ENCODE measurements at regions of chr15 and their contacts with region 1.

Region 1: GRCh38 chr15:47196057-47196456 is 521.2 kb upstream of the SEMA6D start:
- DNase-seq: peak; percentile 83
- H3K4me3 ChIP-seq: no peak overlapping the region
- H3K27ac ChIP-seq: no peak overlapping the region
- H3K4me1 ChIP-seq: peaks cover 3% of the 10 kb centered on the region
- H3K27me3 ChIP-seq: no peaks in the 10 kb centered on the region
- CTCF ChIP-seq: peak; percentile 85
- POLR2A ChIP-seq: no peak

Region 2: DNA sequence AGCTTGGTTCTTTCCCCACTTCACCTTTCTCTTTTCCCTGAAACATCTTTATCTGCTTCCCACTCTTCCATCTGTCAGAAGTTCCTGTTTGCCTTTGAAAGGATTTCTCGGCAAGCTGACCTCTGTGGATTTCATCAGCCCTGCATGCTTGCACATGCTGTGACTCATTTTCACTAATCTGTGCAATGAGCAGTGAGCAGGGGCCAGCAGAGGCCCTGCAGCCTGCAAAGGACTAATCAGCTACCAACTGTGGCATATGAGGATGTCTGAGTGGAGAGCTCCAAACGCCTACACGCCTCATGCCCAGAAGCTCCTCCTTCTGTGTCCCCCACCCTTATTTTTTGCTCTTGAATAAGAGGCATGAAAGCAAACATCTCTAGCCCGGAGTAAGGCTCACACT is 188.3 kb after region 1 on chr15:
- CTCF ChIA-PET with region 1: interaction called, 10 read pairs
- POLR2A ChIA-PET with region 1: no interaction called
- dilution Hi-C with region 1: no loop called
- intact Hi-C with region 1: no loop called
- DNase-seq: peak; percentile 97
- H3K4me3 ChIP-seq: no peak overlapping the region
- H3K27ac ChIP-seq: peak overlapping the region; percentile 83
- H3K4me1 ChIP-seq: peaks cover 21% of the 10 kb centered on the region
- H3K27me3 ChIP-seq: no peaks in the 10 kb centered on the region
- CTCF ChIP-seq: no peak
- POLR2A ChIP-seq: no peak

Region 3: GRCh38 chr15:47516558-47516957 is 320.5 kb after region 1 on chr15:
- CTCF ChIA-PET with region 1: interaction called, 8 read pairs
- POLR2A ChIA-PET with region 1: no interaction called
- dilution Hi-C with region 1: no loop called
- intact Hi-C with region 1: loop called (anchors 5 kb)
- DNase-seq: no peak
- H3K4me3 ChIP-seq: no peak overlapping the region
- H3K27ac ChIP-seq: peak overlapping the region; percentile 66
- H3K4me1 ChIP-seq: peaks cover 52% of the 10 kb centered on the region
- H3K27me3 ChIP-seq: peaks cover 0 to 3% of the 10 kb centered on the region in 2 experiments
- CTCF ChIP-seq: no peak
- POLR2A ChIP-seq: no peak

Region 4: GRCh38 chr15:47663101-47663500 is 467.0 kb after region 1 on chr15:
- CTCF ChIA-PET with region 1: interaction called, 4 read pairs
- POLR2A ChIA-PET with region 1: no interaction called
- dilution Hi-C with region 1: no loop called
- intact Hi-C with region 1: loop called (anchors 1 kb)
- DNase-seq: peak; percentile 21
- H3K4me3 ChIP-seq: no peak overlapping the region
- H3K27ac ChIP-seq: no peak overlapping the region
- H3K4me1 ChIP-seq: peaks cover 28% of the 10 kb centered on the region
- H3K27me3 ChIP-seq: no peaks in the 10 kb centered on the region
- CTCF ChIP-seq: no peak
- POLR2A ChIP-seq: no peak

Region 5: DNA sequence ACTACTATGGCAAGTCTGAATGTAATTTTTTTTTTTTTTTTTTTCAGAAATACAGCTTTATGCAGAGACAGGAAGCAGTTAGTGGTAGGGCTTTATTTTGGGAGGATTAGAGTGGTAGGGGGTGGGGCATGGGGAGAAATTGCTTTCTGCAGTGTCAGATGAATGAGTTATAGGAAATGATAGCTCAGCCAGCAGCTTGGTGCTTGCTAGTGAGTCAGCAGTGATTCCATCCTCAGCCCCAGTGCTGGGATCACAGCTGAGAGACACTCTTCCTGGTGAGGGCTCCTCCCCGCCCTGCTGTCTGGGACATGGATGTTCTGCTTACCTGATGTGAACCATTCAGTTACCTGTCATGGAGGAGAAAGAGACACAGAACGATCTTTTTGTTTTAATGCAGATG is 560.8 kb after region 1 on chr15:
- CTCF ChIA-PET with region 1: interaction called, 3 read pairs
- POLR2A ChIA-PET with region 1: no interaction called
- dilution Hi-C with region 1: no loop called
- intact Hi-C with region 1: loop called (anchors 10 kb)
- DNase-seq: peak; percentile 70
- H3K4me3 ChIP-seq: no peak overlapping the region
- H3K27ac ChIP-seq: peak overlapping the region; percentile 6
- H3K4me1 ChIP-seq: peaks cover 9% of the 10 kb centered on the region
- H3K27me3 ChIP-seq: no peaks in the 10 kb centered on the region
- CTCF ChIP-seq: no peak
- POLR2A ChIP-seq: no peak

Region 6: DNA sequence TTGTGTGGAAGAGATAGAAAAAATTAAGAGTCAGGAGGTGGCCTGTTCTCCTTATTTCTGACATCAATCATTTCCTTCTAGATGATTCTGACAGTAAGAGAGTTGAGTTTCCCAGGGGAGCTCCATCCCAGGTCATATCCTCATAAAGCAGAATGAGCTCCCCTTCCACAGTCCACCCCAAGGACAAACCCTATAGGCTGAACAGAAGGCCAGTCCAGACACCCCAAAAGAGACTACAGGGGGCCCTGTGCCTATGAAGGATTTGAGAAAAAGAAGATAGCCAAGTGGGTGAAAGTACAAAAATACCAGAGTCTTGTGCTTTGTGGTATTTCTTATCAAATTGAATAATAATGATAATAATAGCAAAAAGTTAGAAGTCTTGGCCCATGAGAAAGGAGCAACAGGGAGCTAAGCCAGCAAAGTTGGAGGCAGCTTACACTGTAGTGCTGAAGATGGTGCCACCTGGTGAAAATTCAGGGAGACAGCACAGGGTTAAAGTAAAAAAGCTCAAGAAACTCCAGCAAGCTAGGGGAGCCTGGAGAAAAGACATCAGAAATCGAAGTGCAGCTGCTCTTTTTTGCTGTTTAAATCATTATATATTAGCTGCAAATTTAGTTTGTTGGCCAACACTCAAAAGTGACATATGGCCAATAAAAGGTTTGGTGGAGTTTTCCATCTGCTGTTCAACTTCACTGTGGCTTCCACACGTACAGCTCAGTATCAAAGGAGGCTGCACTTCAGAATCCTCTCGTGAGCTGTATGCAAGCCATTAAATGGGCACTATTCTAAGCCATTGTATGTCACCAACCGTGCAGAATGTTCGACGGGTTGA is 888.9 kb after region 1 on chr15:
- CTCF ChIA-PET with region 1: interaction called, 176 read pairs
- POLR2A ChIA-PET with region 1: no interaction called
- dilution Hi-C with region 1: no loop called
- intact Hi-C with region 1: loop called (anchors 1 kb)
- DNase-seq: peak; percentile 18
- H3K4me3 ChIP-seq: no peak overlapping the region
- H3K27ac ChIP-seq: no peak overlapping the region
- H3K4me1 ChIP-seq: no peaks in the 10 kb centered on the region
- H3K27me3 ChIP-seq: no peaks in the 10 kb centered on the region
- CTCF ChIP-seq: peak; percentile 29 to 47
- POLR2A ChIP-seq: no peak

Measured in endothelial cell of umbilical vein (primary cell).